ENCODE measurements at regions of chr5 and their contacts with region 1.

Region 1: GRCh38 chr5:138352071-138352721 is at the start of gene KDM3B:
- DNase-seq: peak; percentile 76 to 96 (median 89)
- ATAC-seq: peak; percentile 79 to 91 (median 83)
- H3K4me3 ChIP-seq: peak within 1 kb of the TSS; percentile 92
- H3K4me3 Mint-ChIP-seq: peak within 1 kb of the TSS; percentile 92 to 96 (median 95)
- H3K27ac ChIP-seq: peak within 1 kb of the TSS; percentile 87
- H3K27ac Mint-ChIP-seq: peak within 1 kb of the TSS; percentile 92 to 94
- H3K4me1 ChIP-seq: peaks cover 17 to 18% of the 10 kb centered on the region in 2 experiments
- H3K4me1 Mint-ChIP-seq: peaks cover 45 to 54% (median 48%) of the 10 kb centered on the region in 3 donors
- H3K27me3 ChIP-seq: no peaks in the 10 kb centered on the region
- H3K27me3 Mint-ChIP-seq: no peaks in the 10 kb centered on the region
- total RNA-seq, gene KDM3B: 72.9 to 78.3 (median 76.0) TPM

Region 2: DNA sequence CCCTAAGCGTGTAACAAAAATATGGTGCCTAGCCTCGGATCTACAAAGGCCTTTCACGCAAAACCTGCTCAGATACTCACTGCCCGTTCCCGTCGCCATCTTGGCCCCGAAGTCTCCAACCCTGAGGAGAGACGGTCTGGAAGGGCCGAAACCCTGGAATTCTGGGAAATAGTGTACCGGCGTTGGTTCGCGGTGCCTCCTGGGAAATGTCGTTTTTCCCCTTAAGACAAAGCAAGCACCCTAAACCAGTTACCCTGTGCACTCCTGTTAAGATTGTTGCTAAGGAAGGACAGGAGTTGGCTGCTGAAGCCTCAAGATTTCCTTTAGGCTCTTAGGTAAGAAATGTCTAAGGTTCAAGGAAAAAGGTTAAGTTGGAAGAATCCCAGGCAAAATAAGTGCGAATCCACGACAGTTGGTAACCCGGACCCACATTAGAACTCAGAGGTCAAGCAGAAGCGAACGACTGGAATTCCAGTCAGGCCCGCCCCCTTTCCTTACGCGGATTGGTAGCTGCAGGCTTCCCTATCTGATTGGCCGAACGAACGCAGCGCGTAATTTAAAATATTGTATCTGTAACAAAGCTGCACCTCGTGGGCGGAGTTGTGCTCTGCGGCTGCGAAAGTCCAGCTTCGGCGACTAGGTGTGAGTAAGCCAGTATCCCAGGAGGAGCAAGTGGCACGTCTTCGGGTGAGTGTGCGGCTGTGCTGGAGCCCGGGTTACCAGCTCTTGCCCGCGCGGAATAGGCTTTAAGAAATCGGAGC is 173.5 kb before region 1 on chr5 and contains the starts of genes BRD8 and KIF20A:
- CTCF ChIA-PET with region 1: interaction called, 9 to 10 read pairs
- POLR2A ChIA-PET with region 1: interaction called in 1 of 2 experiments, 4 read pairs
- DNase-seq: peak; percentile 73 to 92 (median 83)
- ATAC-seq: peak; percentile 90 to 93 (median 93)
- H3K4me3 ChIP-seq: peak within 1 kb of the TSS; percentile 66 to 97
- H3K4me3 Mint-ChIP-seq: peak within 1 kb of the TSS in 1 of 3 donors; percentile 56
- H3K27ac ChIP-seq: peak within 1 kb of the TSS; percentile 50
- H3K27ac Mint-ChIP-seq: no peak within 1 kb of the TSS
- H3K4me1 ChIP-seq: peaks cover 9 to 21% of the 10 kb centered on the region in 2 experiments
- H3K4me1 Mint-ChIP-seq: peaks cover 9 to 14% (median 10%) of the 10 kb centered on the region in 3 donors
- H3K27me3 ChIP-seq: no peaks in the 10 kb centered on the region
- H3K27me3 Mint-ChIP-seq: no peaks in the 10 kb centered on the region
- total RNA-seq, gene BRD8: 29.5 to 79.5 (median 72.2) TPM
- total RNA-seq, gene KIF20A: 0.32 to 0.67 (median 0.56) TPM

Region 3: GRCh38 chr5:138305797-138306196 is 46.4 kb before region 1 on chr5:
- CTCF ChIA-PET with region 1: no interaction called
- POLR2A ChIA-PET with region 1: interaction called in 1 of 2 experiments, 11 read pairs
- DNase-seq: peak in 5 of 35 experiments; percentile 1 to 9 (median 4)
- ATAC-seq: no peak
- H3K4me3 ChIP-seq: no peak overlapping the region
- H3K4me3 Mint-ChIP-seq: no peak overlapping the region
- H3K27ac ChIP-seq: no peak overlapping the region
- H3K27ac Mint-ChIP-seq: no peak overlapping the region
- H3K4me1 ChIP-seq: no peaks in the 10 kb centered on the region
- H3K4me1 Mint-ChIP-seq: no peaks in the 10 kb centered on the region
- H3K27me3 ChIP-seq: no peaks in the 10 kb centered on the region
- H3K27me3 Mint-ChIP-seq: no peaks in the 10 kb centered on the region

Region 4: DNA sequence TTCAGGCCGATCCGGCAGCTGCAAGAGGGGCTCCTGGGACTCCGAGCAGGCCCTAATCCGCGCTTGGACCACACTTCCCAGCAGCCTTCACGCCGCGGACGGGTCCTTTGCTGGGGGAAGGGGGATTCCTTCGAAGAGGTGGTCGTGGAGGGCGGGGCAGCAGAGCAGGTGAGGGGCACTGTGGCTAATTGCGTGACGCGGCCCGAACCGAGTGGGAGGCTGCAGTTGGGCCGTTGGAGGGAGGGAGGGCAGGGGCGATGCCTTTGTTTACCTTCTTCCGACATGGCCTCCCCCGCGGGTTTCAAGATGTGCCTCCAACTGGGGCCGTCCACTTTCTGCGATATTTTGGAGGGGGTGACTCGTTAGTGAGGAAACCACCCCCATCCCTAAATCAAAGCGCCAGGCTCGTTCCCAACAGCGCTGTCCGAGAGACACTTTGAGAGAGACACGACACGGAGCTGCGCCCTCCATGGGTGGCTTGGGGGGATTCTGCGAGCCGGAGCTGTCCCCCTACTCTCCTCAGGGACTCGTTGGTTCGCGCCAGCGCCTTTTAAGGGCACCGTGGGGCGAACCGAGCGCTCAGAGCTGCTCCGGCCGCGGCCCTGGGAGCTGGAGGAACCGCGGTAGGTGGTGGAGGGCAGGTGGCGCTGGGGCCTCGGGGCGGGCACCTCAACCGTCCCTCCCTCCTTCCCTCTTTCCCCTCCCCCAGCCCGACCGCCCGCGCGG is 14.3 kb before region 1 on chr5 and contains the start of gene FAM53C:
- CTCF ChIA-PET with region 1: interaction called, 9 to 89 read pairs
- POLR2A ChIA-PET with region 1: interaction called, 26 to 33 read pairs
- DNase-seq: peak; percentile 79 to 96 (median 89)
- ATAC-seq: peak; percentile 85 to 92 (median 91)
- H3K4me3 ChIP-seq: peak within 1 kb of the TSS; percentile 75 to 90
- H3K4me3 Mint-ChIP-seq: peak within 1 kb of the TSS; percentile 87 to 91 (median 89)
- H3K27ac ChIP-seq: peak within 1 kb of the TSS; percentile 98
- H3K27ac Mint-ChIP-seq: peak within 1 kb of the TSS; percentile 98 to 100
- H3K4me1 ChIP-seq: peaks cover 20 to 22% of the 10 kb centered on the region in 2 experiments
- H3K4me1 Mint-ChIP-seq: peaks cover 34 to 41% (median 37%) of the 10 kb centered on the region in 3 donors
- H3K27me3 ChIP-seq: no peaks in the 10 kb centered on the region
- H3K27me3 Mint-ChIP-seq: no peaks in the 10 kb centered on the region
- total RNA-seq, gene FAM53C: 22.2 to 58.3 (median 25.5) TPM

Region 5: GRCh38 chr5:138575194-138576015 is 223.2 kb after region 1 on chr5 and contains the start of gene HSPA9:
- CTCF ChIA-PET with region 1: interaction called in 1 of 2 experiments, 13 read pairs
- POLR2A ChIA-PET with region 1: no interaction called
- DNase-seq: peak; percentile 94 to 100 (median 97)
- ATAC-seq: peak; percentile 85 to 88 (median 86)
- H3K4me3 ChIP-seq: peak within 1 kb of the TSS; percentile 95 to 99
- H3K4me3 Mint-ChIP-seq: peak within 1 kb of the TSS; percentile 96
- H3K27ac ChIP-seq: peak within 1 kb of the TSS; percentile 94
- H3K27ac Mint-ChIP-seq: peak within 1 kb of the TSS; percentile 100
- H3K4me1 ChIP-seq: peaks cover 8 to 26% of the 10 kb centered on the region in 2 experiments
- H3K4me1 Mint-ChIP-seq: peaks cover 29 to 43% (median 35%) of the 10 kb centered on the region in 3 donors
- H3K27me3 ChIP-seq: no peaks in the 10 kb centered on the region
- H3K27me3 Mint-ChIP-seq: no peaks in the 10 kb centered on the region
- total RNA-seq, gene HSPA9: 148 to 299 (median 162) TPM

Measured in T-cell (primary cell).